Common myeloid progenitor, CD34-positive (primary cell): ENCODE measurements at regions of chr14 and their contacts with region 1.

Region 1: GRCh38 chr14:22598099-22598899 is at the start of gene ABHD4:
- DNase-seq: peak; percentile 56 to 79 (median 71)
- H3K4me3 ChIP-seq: peak within 1 kb of the TSS; percentile 71 to 98 (median 94)
- H3K27ac ChIP-seq: peak within 1 kb of the TSS; percentile 61 to 87
- H3K4me1 ChIP-seq: peaks cover 14 to 47% (median 33%) of the 10 kb centered on the region in 4 experiments
- H3K27me3 ChIP-seq: no peaks in the 10 kb centered on the region

Region 2: GRCh38 chr14:21978184-21978998 is 619.9 kb before region 1 on chr14:
- CTCF ChIA-PET with region 1: no interaction called
- POLR2A ChIA-PET with region 1: no interaction called
- DNase-seq: peak; percentile 53 to 78 (median 68)
- H3K4me3 ChIP-seq: no peak overlapping the region
- H3K27ac ChIP-seq: no peak overlapping the region
- H3K4me1 ChIP-seq: no peaks in the 10 kb centered on the region
- H3K27me3 ChIP-seq: no peaks in the 10 kb centered on the region

Region 3: GRCh38 chr14:22653012-22653621 is 54.8 kb after region 1 on chr14:
- CTCF ChIA-PET with region 1: interaction called, 10 read pairs
- POLR2A ChIA-PET with region 1: no interaction called
- DNase-seq: peak; percentile 56 to 76 (median 75)
- H3K4me3 ChIP-seq: no peak overlapping the region
- H3K27ac ChIP-seq: no peak overlapping the region
- H3K4me1 ChIP-seq: peaks cover 0 to 2% (median 0%) of the 10 kb centered on the region in 4 experiments
- H3K27me3 ChIP-seq: peaks cover 0 to 3% (median 0%) of the 10 kb centered on the region in 5 experiments

Region 4: GRCh38 chr14:22715186-22715812 is 117.0 kb after region 1 on chr14:
- CTCF ChIA-PET with region 1: no interaction called
- POLR2A ChIA-PET with region 1: no interaction called
- DNase-seq: peak in 1 of 3 donors; percentile 21
- H3K4me3 ChIP-seq: no peak overlapping the region
- H3K27ac ChIP-seq: no peak overlapping the region
- H3K4me1 ChIP-seq: peaks cover 0 to 9% (median 3%) of the 10 kb centered on the region in 4 experiments
- H3K27me3 ChIP-seq: peaks cover 0 to 17% (median 2%) of the 10 kb centered on the region in 5 experiments